ENCODE measurements at regions of chr18 and their contacts with region 1.

Region 1: DNA sequence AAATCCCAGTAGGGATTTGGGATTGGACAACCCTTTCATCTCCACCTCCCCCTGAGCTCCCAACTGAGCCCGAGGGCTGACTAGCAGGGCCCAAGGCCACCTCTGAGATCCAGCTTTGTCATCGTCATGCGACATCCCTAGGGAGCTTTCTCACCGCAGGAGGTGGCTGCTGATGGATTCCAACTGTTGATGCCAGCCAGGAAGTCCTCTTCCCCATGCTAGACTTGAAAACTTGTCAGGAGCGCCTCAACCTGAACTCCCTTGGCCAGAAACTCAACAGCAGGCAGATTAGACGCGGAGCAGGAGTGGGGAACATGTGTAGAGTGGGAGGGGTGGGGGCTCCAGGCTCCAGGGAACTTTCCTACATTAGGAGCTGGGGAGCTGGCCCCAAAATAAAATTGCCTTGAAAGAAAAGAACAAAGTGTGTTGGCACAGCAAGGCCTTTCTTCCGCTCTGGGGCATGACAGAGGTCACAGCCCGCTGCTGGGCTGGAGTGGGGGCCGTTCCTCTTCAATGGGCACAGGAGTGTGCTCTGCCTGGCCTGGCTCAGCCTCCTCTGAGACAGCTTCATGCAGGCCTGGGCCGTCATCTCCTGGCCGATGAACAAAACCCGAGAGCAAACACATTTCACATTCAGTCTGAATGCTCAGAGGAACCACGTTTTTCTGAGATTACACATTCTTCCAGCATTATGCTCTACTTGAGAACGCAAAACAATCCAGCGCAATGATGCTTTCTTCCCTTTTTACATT is 34.5 kb downstream of the EMILIN2 start:
- DNase-seq: no peak
- ATAC-seq: no peak
- H3K4me3 ChIP-seq: peak overlapping the region; percentile 18
- H3K4me3 Mint-ChIP-seq: peak overlapping the region; percentile 46
- H3K27ac ChIP-seq: no peak overlapping the region
- H3K27ac Mint-ChIP-seq: peak overlapping the region; percentile 86
- H3K4me1 ChIP-seq: peaks cover 52% of the 10 kb centered on the region
- H3K4me1 Mint-ChIP-seq: peaks cover 26% of the 10 kb centered on the region
- H3K27me3 ChIP-seq: no peaks in the 10 kb centered on the region
- H3K27me3 Mint-ChIP-seq: no peaks in the 10 kb centered on the region
- CTCF ChIP-seq: no peak

Region 2: GRCh38 chr18:2818281-2818680 is 63.0 kb before region 1 on chr18:
- CTCF ChIA-PET with region 1: no interaction called
- POLR2A ChIA-PET with region 1: no interaction called
- intact Hi-C with region 1: loop called in 1 of 2 experiments (anchors 10 kb)
- DNase-seq: no peak
- ATAC-seq: no peak
- H3K4me3 ChIP-seq: no peak overlapping the region
- H3K4me3 Mint-ChIP-seq: no peak overlapping the region
- H3K27ac ChIP-seq: no peak overlapping the region
- H3K27ac Mint-ChIP-seq: no peak overlapping the region
- H3K4me1 ChIP-seq: no peaks in the 10 kb centered on the region
- H3K4me1 Mint-ChIP-seq: no peaks in the 10 kb centered on the region
- H3K27me3 ChIP-seq: peaks cover 0 to 2% of the 10 kb centered on the region in 2 experiments
- H3K27me3 Mint-ChIP-seq: no peaks in the 10 kb centered on the region
- CTCF ChIP-seq: no peak